AG04449 (cell line): ENCODE measurements at regions of chr15 and their contacts with region 1.

Region 1: DNA sequence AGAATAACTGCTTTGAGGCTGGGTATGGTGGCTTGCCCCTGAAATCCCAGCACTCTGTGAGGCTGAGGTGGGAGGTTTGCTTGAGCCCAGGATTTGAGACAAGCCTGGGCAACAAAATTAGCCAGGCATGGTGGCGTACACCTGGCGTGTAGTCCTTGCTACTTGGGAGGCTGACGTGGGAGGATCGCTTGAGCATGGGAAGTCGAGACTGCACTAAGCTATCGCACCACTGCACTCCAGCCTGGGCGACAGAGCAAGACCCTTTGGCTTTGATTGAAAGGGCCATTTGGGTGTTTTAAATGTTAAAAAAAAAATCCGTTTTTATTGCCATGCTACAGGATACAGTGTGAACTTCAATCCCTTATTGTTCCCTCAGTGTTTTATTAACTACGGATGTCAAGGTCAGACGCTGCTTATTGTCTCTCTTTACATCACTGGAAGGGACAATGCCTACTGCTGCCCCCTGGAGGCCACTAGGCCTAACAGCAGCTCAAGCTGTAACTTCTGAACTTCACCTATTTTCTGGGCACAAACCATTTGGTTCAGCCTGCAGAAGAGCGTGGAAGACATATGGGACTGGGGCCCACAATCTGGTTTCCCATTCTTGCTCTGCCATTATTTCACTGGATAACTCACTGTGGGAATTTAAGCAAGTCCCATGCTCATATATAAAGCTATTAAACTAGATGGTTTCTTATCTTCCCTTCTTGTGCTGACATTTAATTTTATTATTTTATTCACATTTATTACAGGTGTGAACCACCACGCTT is 15.3 kb upstream of the IREB2 start:
- DNase-seq: no peak
- H3K4me3 ChIP-seq: no peak overlapping the region
- CTCF ChIP-seq: peak; percentile 88

Region 2: DNA sequence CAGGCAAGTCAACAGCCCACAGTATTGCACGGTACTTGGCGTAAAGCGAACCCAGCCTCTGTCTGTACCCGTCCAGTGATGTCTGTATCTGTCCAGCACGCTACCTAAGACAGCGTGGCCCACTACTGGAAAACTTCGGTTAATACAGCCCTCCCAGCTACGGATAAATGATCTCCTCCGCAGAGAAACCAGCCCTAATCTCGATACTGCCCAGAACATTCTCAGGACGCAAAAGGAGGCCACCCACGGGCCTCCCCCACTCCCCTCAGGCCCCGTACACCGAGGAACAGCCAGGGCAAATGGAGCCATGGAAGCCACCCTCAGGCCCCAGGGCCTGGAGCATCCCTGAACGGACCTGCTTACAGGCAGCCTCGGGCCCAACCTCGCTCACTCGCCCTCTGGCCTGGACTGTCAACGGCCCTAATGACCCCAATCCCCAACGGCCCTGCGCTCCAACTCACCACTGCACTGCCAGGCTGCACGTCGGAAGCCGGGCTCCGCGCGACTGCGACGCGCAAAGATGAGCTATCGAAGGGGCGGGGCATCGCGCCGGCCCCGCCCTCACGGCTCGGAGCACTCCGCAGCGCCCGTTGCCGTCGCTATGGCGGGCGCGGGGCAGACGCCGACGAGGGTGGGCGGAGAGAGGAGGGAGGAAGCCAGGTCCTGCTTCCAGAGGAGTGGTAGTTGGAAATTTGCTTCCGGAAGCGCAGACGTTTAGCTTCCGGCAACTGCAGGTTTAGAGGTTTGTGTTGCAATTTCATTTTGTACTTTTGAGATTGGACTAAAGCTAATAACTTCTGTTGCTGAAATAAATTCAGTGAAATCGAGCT is 123.4 kb before region 1 on chr15 and contains the start of gene SKIC8:
- CTCF ChIA-PET with region 1: interaction called, 714 read pairs
- POLR2A ChIA-PET with region 1: interaction called, 4 read pairs
- DNase-seq: no peak
- H3K4me3 ChIP-seq: peak within 1 kb of the TSS; percentile 100
- CTCF ChIP-seq: no peak

Region 3: DNA sequence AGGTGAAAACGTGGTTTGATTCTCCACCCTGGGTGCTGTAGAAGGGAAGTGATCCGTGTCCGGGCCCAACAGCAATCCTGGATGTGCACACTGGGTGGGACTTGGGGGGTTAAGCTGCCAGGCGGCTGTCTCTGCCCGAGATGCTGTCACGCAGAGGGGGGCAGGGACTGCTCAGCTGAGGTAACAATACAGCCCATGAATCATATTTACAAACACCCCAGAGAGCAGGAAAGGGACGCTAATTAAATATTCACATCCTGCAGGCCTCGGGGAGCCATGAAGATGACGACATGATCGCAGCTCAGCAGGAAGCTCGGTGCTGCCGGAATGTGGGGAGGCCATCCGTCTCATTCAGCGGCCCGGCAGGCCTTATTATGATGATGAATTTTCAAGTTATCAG is 100.5 kb before region 1 on chr15:
- CTCF ChIA-PET with region 1: interaction called, 714 read pairs
- POLR2A ChIA-PET with region 1: no interaction called
- DNase-seq: no peak
- H3K4me3 ChIP-seq: no peak overlapping the region
- CTCF ChIP-seq: no peak

Region 4: DNA sequence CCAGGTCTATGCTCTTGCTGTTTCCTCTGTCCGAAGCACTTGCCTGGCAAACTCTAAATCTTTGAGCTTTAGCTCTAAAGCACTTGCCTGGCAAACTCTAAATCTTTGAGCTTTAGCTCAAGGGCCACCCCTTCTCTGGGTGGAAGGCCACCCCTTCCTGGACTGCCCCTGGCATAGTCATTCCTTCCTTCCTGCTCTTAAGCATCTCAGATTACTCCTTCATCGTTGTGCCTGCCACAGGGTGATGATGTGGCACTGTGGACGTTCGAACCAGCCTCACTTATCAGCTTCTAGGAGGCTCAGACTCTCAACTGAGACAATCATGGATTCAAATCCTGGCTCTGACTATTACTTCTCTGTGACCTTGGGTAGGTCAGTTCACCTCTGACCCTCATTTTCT is 93.1 kb before region 1 on chr15:
- CTCF ChIA-PET with region 1: interaction called, 12 read pairs
- POLR2A ChIA-PET with region 1: no interaction called
- DNase-seq: no peak
- H3K4me3 ChIP-seq: no peak overlapping the region
- CTCF ChIP-seq: no peak

Region 5: GRCh38 chr15:78394981-78395616 is 27.7 kb before region 1 on chr15:
- CTCF ChIA-PET with region 1: interaction called, 14 read pairs
- POLR2A ChIA-PET with region 1: no interaction called
- DNase-seq: no peak
- H3K4me3 ChIP-seq: no peak overlapping the region
- CTCF ChIP-seq: no peak

Region 6: DNA sequence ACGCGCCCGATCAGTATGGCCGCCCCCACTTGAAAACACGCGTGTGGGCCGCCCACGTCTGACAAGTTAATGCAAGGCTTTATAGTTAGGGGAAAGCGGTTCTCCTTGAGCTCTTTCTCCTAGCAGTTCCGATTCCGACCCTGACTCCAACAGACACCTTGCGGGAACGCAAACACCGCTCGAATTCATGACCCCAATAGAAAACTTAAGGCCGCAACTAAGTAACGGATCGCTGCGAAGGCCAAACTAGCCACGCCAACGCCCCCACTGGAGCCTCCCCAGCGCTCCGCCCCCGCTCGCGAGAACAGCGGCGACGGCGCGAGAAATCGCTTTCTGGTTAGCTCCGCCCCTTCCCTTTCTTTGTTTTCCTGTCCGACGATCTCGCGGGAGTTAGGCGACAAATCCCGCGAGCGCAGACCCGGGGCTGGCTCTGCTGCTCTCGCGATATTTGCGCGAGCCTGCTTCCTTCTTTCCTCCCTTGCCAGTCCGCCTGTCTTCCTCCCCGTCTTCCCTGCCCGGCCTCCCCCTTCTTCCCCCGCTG is 15.1 kb after region 1 on chr15 and contains the start of gene IREB2:
- CTCF ChIA-PET with region 1: interaction called, 81 read pairs
- POLR2A ChIA-PET with region 1: no interaction called
- DNase-seq: peak; percentile 86
- H3K4me3 ChIP-seq: peak within 1 kb of the TSS; percentile 95
- CTCF ChIP-seq: no peak

Region 7: GRCh38 chr15:78506971-78507830 is 84.4 kb after region 1 on chr15 and contains the start of gene HYKK:
- CTCF ChIA-PET with region 1: no interaction called
- POLR2A ChIA-PET with region 1: no interaction called
- DNase-seq: peak; percentile 82
- H3K4me3 ChIP-seq: peak within 1 kb of the TSS; percentile 97
- CTCF ChIP-seq: peak; percentile 27

Region 8: GRCh38 chr15:78750566-78750965 is 327.8 kb after region 1 on chr15:
- CTCF ChIA-PET with region 1: no interaction called
- POLR2A ChIA-PET with region 1: no interaction called
- DNase-seq: no peak
- H3K4me3 ChIP-seq: no peak overlapping the region; the same call in 1 of the 2 replicates
- CTCF ChIP-seq: no peak